PC-9 (cell line): ENCODE measurements at regions of chr19 and their contacts with region 1.

Region 1: DNA sequence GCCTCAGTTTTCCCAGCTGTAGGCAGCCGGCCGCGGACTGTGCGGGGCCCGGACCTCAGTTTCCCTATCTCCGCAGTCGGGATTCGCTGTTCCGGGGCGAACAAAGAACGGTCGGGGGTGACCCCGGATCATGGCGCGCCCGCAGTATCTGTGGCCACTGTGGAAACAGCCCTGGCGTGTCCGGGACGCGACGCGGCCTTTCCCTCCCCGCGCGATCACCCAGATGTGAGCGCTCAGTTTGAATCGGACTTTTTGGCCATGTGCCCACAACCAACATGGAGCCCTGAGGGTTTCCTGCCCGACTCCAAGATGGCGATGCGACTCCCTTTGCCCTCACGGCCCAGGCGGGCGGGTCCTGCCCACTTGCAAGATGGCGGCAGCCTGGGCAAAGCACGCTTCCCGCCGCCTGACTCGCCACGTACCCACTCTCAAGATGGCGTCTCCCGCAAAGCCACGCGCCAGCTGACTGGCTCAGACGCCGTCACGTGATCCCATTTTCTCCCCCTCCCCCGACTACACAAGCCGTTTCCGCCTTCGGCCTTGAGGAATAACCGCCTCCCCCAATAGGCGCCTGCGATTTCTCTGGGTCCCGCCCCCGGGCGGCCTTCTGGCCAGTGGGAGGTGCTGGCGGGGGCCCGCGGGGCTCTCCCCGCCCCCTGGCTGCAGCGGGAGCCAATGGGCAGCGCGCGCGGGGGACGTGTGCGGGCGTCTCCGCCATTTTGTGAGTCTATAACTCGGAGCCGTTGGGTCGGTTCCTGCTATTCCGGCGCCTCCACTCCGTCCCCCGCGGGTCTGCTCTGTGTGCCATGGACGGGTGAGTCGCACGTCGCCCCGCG is at the start of gene PTBP1:
- DNase-seq: peak; percentile 98 to 99
- H3K4me3 ChIP-seq: peak within 1 kb of the TSS; percentile 78
- H3K27ac ChIP-seq: peak within 1 kb of the TSS; percentile 85
- H3K4me1 ChIP-seq: peaks cover 23% of the 10 kb centered on the region
- H3K27me3 ChIP-seq: no peaks in the 10 kb centered on the region
- CTCF ChIP-seq: no peak
- total RNA-seq, gene PTBP1: 461 and 542 TPM in 2 replicates

Region 2: DNA sequence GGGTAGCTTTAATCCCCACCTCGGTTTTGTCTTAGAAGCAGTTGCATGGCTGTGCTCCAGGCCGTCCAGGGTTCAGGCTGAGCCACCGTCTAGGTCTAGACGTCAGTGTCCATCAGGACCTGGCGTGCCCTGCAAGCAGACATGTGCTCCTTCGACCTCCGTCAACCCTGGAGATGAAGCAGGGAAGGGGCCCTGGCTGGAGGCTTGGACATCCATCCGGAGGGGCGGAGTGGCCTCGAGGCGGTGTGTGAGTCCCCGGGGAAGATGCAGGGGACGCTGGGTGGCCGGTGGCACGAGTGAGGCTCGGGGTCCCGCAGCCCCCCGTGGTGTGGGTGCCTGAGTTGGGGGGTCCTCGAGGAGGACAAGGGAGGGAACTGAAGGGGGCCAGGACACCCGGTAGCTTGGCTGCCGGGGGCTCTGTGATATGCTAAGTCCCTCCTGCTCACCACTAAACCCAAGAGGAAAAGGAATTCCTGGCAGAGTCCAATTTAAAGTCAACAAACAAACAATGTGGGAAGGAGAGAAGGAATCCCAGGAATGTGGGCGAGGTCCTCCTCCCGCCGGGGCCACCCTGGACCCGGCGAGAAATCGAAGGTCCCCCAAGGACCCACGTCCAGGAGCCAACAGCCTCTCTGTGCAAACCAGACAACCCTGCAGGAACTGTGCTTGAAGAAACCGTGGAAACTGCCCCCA is 14.6 kb before region 1 on chr19:
- CTCF ChIA-PET with region 1: no interaction called
- POLR2A ChIA-PET with region 1: no interaction called
- intact Hi-C with region 1: loop called (anchors 2 kb)
- DNase-seq: peak; percentile 74 to 79
- H3K4me3 ChIP-seq: peak overlapping the region; percentile 68
- H3K27ac ChIP-seq: peak overlapping the region; percentile 70
- H3K4me1 ChIP-seq: peaks cover 37% of the 10 kb centered on the region
- H3K27me3 ChIP-seq: no peaks in the 10 kb centered on the region
- CTCF ChIP-seq: no peak